ENCODE measurements at regions of chr1 and their contacts with region 1.

Region 1: DNA sequence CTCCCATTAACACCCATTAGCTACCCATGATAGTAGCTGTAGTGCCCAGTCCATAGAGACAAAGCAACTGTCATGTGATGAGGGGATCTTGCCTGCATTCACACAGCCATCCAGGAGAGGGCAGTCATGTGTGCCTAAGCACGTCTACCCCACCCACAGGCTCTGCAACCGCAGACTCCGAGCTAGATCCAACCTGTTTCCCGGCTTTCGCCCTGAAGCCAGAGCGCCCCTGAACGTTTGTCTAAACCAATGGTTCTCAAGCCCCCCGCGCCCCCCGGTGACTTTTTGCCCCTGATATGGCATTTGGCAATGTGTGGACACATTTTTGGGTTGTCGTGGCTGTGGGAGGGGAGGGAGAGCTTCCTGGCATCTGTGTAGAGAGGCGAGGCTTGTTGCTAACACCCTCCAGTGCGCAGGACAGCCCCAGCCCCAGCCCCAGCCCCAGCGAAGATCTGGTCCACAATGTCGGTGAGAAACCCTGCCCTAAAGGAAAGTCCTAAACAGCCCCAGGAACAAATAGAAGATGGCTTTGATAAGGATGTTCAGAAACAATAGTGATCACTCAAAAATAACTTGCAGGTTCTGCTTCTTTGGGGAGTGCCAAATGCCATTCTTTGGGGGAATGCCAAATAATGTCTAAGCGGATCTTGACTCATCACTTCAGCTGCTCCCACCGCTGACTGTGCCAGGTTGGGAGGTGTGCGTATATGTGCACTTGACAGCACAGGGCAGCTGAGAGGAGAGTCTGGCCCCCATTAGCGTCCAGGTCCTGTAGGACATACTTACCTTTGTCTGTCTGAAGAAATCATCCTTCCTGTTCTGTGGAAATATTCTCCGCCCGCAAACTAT is 34.5 kb downstream of the SLC44A3 start:
- H3K4me3 ChIP-seq: peak overlapping the region; percentile 46
- H3K27ac ChIP-seq: no peak overlapping the region
- H3K4me1 ChIP-seq: peaks cover 5% of the 10 kb centered on the region; the same call in 1 of the 2 replicates
- CTCF ChIP-seq: peak; percentile 90

Region 2: GRCh38 chr1:94636624-94637023 is 218.1 kb before region 1 on chr1:
- CTCF ChIA-PET with region 1: no interaction called
- POLR2A ChIA-PET with region 1: no interaction called
- H3K4me3 ChIP-seq: no peak overlapping the region
- H3K27ac ChIP-seq: no peak overlapping the region
- H3K4me1 ChIP-seq: no peaks in the 10 kb centered on the region
- CTCF ChIP-seq: no peak

Region 3: GRCh38 chr1:94772230-94772641 is 82.4 kb before region 1 on chr1:
- CTCF ChIA-PET with region 1: no interaction called
- POLR2A ChIA-PET with region 1: no interaction called
- H3K4me3 ChIP-seq: no peak overlapping the region
- H3K27ac ChIP-seq: no peak overlapping the region
- H3K4me1 ChIP-seq: no peaks in the 10 kb centered on the region
- CTCF ChIP-seq: no peak

Region 4: GRCh38 chr1:94873522-94874351 is 19.1 kb after region 1 on chr1:
- CTCF ChIA-PET with region 1: interaction called, 12 read pairs
- POLR2A ChIA-PET with region 1: interaction called, 4 read pairs
- H3K4me3 ChIP-seq: no peak overlapping the region
- H3K27ac ChIP-seq: no peak overlapping the region
- H3K4me1 ChIP-seq: no peaks in the 10 kb centered on the region
- CTCF ChIP-seq: no peak

Region 5: DNA sequence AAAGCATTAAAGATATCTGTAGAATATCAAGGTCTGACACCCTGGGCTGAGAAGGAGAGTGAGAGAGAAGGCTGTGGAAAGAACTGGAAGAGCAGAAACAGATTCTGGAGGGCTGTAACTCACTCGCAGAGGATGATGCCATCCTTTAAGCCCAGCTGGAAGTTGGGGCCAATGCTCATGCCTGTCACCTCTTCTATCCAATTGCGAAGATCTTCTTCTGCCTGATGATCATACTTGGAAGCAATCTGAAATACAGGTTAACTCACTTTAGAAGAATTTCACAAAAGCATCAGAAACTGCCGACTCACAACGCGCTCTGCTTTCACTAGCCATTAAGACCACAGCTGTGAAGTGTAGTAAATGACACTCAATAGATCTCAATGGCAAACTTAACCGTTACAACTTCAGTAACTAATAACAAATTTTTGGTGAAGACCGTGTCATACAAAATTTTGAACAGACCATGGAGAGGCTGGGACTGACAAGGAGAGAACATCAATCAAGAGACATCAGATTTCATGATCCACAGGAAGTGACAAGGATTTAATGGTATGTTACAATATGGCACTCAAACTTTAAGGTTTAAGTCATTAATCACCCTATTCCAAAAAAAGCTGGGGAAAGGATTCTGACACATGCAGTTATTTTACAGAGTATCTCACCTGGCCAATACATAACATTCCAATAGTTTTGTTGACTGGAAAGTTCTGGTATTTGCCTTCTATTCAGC is 48.8 kb after region 1 on chr1:
- CTCF ChIA-PET with region 1: interaction called, 17 read pairs
- POLR2A ChIA-PET with region 1: no interaction called
- H3K4me3 ChIP-seq: no peak overlapping the region
- H3K27ac ChIP-seq: no peak overlapping the region
- H3K4me1 ChIP-seq: peaks cover 4% of the 10 kb centered on the region; the same call in 1 of the 2 replicates
- CTCF ChIP-seq: no peak

Region 6: DNA sequence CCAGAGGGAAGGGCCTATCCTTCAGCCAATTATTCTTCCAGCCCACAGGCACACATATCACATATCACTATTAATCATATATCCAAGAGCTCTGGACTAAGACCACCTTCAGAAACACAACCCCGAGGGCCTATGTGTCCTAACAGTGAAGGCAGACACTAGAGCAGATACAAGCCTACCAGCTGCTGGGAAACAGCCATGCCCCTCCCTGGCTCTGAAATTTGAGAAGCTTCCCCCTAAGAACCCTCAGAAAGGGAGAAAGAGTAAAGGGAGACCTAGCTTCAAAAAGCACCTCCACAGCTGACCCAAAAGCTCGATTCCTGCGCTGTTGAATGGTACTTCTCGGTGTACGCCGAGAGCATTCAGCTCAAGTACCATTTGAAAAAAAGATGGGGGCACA is 54.8 kb after region 1 on chr1:
- CTCF ChIA-PET with region 1: interaction called, 13 read pairs
- POLR2A ChIA-PET with region 1: no interaction called
- H3K4me3 ChIP-seq: no peak overlapping the region
- H3K27ac ChIP-seq: no peak overlapping the region
- H3K4me1 ChIP-seq: peaks cover 18% of the 10 kb centered on the region
- CTCF ChIP-seq: no peak

Region 7: GRCh38 chr1:94926915-94927404 is 72.3 kb after region 1 on chr1 and contains the start of gene CNN3:
- CTCF ChIA-PET with region 1: interaction called, 15 read pairs
- POLR2A ChIA-PET with region 1: interaction called, 15 read pairs
- H3K4me3 ChIP-seq: peak within 1 kb of the TSS; percentile 82
- H3K27ac ChIP-seq: peak within 1 kb of the TSS; percentile 97
- H3K4me1 ChIP-seq: peaks cover 27% of the 10 kb centered on the region
- CTCF ChIP-seq: no peak; the same call in 1 of the 2 replicates

Region 8: DNA sequence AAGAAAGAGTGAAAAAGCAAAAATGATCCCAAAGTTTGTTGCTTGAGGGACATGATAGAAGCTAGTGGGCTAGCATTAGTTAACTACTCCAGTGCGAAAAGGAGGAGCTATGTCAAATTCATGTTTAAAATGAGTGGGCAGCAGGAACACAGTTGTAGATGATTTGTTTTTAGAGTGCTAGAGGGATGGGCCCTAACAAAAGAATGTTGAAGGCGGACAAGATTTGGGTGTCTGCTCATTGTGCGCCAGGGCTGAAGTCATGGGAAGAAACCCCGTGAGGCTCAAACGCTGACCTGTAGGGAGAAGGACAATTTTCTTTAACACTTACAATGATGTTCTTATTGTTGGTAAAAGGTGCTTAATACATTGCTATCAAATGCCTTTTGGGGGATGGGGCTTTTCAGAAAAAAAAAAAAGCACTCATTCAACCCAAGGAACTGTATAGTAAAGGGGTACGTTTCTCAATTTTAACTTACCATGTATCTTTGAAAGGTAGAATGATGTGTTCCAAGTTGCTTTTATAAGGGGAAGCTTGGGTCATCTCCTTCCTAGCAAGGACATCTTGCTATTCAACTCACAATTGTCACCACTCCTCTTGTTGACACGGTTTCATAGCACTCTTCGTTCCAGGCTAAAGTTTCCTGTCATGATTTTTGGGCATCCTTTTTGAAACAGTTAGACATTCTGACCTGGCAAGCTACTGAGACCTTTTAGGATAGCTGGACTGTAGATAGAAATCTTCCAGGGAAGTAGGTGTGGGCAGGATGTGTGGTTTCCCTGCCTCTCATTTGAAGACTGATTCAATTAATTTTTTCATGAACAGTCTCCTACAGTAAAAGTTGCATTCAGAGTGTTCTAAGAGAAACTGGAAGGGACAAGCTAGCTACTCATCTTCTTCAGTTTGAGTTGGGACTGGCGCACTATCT is 125.2 kb after region 1 on chr1:
- CTCF ChIA-PET with region 1: no interaction called
- POLR2A ChIA-PET with region 1: no interaction called
- H3K4me3 ChIP-seq: no peak overlapping the region
- H3K27ac ChIP-seq: no peak overlapping the region
- H3K4me1 ChIP-seq: no peaks in the 10 kb centered on the region
- CTCF ChIP-seq: no peak

Region 9: DNA sequence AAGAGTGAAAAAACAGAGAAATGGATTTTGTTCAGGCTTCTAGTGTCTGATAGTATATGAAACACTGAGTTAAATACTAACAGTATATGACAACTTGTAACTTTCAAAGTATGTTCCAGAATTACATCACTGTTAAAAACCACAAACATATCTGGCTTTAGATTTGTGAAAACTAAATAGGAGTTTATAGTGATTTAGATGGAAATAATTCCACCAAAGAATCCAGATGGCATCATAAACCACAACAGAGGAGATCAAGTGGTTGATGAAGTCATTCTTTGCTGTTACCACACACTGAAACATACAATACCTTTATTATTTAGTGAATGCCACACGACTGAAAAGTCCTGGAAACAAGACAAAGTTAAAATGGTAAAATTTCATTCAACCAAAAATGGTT is 180.9 kb after region 1 on chr1:
- CTCF ChIA-PET with region 1: interaction called, 142 read pairs
- POLR2A ChIA-PET with region 1: no interaction called
- H3K4me3 ChIP-seq: no peak overlapping the region
- H3K27ac ChIP-seq: no peak overlapping the region
- H3K4me1 ChIP-seq: no peaks in the 10 kb centered on the region
- CTCF ChIP-seq: no peak